Lower leg skin (tissue), 4 donors: ENCODE measurements at regions of chr4 and their contacts with region 1.

Region 1: GRCh38 chr4:126616795-126617194 is 1016.0 kb upstream of the INTU start:
- DNase-seq: no peak
- H3K4me3 ChIP-seq: no peak overlapping the region
- CTCF ChIP-seq: no peak
- POLR2A ChIP-seq: no peak

Region 2: GRCh38 chr4:126599746-126600145 is 17.0 kb before region 1 on chr4:
- intact Hi-C with region 1: loop called (anchors 1 kb)
- DNase-seq: no peak
- H3K4me3 ChIP-seq: no peak overlapping the region
- CTCF ChIP-seq: no peak
- POLR2A ChIP-seq: no peak

Region 3: GRCh38 chr4:126661194-126661593 is 44.4 kb after region 1 on chr4:
- intact Hi-C with region 1: no loop called
- DNase-seq: no peak
- H3K4me3 ChIP-seq: no peak overlapping the region
- CTCF ChIP-seq: no peak
- POLR2A ChIP-seq: no peak